HEK293 (cell line): ENCODE measurements at regions of chr17 and their contacts with region 1.

Region 1: DNA sequence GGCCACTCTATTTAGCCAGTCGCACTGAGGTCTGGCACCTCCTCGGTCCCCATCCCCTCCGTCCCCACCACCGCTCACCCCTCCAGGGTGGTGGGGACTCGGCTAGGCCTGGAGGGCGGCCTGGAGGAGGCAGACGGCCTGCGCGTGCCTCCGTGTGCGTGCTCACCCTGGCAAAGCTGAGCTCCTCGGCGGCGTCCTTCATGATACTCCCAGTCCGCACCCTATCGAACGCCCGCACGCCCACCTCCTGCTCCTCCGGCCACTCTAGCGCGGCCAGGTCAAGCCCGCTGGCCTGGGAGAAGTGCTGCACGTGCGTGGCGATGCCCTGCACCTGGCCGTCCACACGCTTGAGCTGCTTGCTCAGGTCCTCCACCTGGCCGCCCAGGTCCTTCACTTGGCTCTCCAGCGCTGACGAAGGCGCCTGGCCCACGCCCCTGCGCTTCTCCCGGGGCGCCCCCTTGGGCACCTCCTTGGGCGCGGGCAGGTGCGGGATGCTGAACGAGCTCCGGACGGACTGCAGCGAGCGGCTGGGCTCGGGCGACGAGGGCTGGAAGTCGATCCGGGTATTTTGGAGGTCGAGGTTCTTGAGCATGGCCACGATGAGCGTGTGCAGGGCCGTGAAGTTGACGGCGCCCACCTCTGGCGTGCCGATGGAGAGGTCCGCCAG is 644 bp downstream of the QRICH2 start:
- H3K4me3 ChIP-seq: no peak overlapping the region
- H3K27ac ChIP-seq: no peak overlapping the region
- H3K4me1 ChIP-seq: no peaks in the 10 kb centered on the region
- CTCF ChIP-seq: no peak

Region 2: GRCh38 chr17:76296186-76296585 is 11.2 kb before region 1 on chr17:
- CTCF ChIA-PET with region 1: interaction called, 18 read pairs
- POLR2A ChIA-PET with region 1: no interaction called
- H3K4me3 ChIP-seq: no peak overlapping the region
- H3K27ac ChIP-seq: no peak overlapping the region
- H3K4me1 ChIP-seq: no peaks in the 10 kb centered on the region
- CTCF ChIP-seq: no peak

Region 3: DNA sequence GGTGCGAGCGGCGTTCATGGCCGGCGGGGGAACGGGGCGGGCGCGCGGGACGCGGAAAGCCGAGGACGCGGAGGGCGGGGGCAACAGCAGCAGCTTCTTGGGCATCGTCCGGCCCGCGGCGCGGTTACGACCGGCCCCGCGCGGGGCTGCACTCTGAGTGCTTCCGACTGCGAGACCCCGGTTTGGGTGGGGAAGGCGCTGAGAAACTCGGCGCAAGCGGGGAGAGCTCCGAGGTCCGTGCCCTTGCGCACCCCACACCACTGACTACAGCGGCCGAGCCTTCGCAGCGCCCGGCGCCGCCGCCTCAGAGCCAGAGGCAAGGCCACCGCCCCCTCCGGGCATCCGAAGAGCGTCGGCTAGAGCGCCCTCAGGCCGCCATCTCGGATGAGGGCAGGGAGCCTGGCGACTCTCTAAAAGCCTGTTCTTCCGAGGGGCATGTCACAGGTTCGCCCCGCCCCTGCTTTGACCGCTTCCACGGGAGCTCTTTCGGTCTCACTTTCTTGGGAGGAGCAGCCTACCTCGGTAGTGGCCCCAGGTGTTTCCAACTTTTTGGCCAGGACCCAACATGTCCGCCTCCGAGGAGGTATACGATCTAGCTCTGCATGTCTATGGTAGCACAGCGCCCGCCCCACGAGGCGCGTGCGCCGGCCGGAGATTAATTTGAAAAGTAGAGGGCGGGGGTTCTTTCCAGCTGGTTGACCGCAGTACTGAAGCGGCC is 46.3 kb after region 1 on chr17 and contains the start of gene PRPSAP1:
- CTCF ChIA-PET with region 1: interaction called, 10 read pairs
- POLR2A ChIA-PET with region 1: interaction called, 4 read pairs
- H3K4me3 ChIP-seq: peak within 1 kb of the TSS; percentile 90
- H3K27ac ChIP-seq: peak within 1 kb of the TSS; percentile 96
- H3K4me1 ChIP-seq: peaks cover 12% of the 10 kb centered on the region; the same call in 1 of the 2 replicates
- CTCF ChIP-seq: peak; percentile 69

Region 4: DNA sequence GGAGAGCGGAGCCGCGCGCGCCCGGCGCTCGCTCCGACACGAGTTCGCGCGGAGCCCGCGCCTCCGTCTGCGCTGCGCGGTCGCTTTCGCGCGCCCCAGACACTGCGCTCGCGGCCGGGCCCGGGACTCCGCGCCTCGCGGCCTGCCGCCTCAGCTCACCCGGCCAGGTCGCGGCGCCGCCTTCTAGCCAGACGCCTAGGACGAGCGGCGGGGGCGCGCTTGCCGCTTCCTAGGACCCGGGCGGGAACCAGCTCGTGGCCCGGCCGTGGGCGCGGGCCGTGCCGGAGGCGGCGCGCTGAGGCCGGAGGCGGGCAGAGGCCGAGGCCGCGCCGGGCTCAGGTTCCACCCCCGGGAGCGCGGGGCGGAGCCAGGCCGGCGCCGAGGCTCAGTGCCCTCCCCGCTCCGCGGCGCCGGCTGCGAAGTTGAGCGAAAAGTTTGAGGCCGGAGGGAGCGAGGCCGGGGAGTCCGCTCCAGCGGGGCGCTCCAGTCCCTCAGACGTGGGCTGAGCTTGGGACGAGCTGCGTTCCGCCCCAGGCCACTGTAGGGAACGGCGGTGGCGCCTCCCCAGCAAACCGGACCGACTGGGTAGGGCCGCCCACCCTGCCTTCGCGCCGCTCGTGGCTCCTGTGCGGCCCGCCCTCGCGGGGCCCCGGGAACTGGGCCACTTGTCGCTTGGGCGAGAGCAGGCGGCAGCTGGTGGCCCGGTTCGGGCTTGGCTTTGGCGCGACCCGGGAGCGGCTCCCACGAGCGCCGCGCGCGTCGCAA is 77.0 kb after region 1 on chr17 and contains the start of gene SPHK1:
- CTCF ChIA-PET with region 1: interaction called, 49 read pairs
- POLR2A ChIA-PET with region 1: interaction called, 5 read pairs
- H3K4me3 ChIP-seq: peak within 1 kb of the TSS; percentile 54
- H3K27ac ChIP-seq: peak within 1 kb of the TSS; percentile 77; the same call in 1 of the 2 replicates
- H3K4me1 ChIP-seq: peaks cover 8% of the 10 kb centered on the region; the same call in 1 of the 2 replicates
- CTCF ChIP-seq: peak; percentile 36; the same call in 1 of the 2 replicates

Region 5: GRCh38 chr17:76390003-76390421 is 82.6 kb after region 1 on chr17:
- CTCF ChIA-PET with region 1: interaction called, 49 read pairs
- POLR2A ChIA-PET with region 1: interaction called, 5 read pairs
- H3K4me3 ChIP-seq: no peak overlapping the region
- H3K27ac ChIP-seq: no peak overlapping the region
- H3K4me1 ChIP-seq: peaks cover 4% of the 10 kb centered on the region; the same call in 1 of the 2 replicates
- CTCF ChIP-seq: no peak

Region 6: GRCh38 chr17:76458580-76459490 is 151.4 kb after region 1 on chr17:
- CTCF ChIA-PET with region 1: interaction called, 13 read pairs
- POLR2A ChIA-PET with region 1: no interaction called
- H3K4me3 ChIP-seq: no peak overlapping the region
- H3K27ac ChIP-seq: no peak overlapping the region
- H3K4me1 ChIP-seq: no peaks in the 10 kb centered on the region
- CTCF ChIP-seq: peak; percentile 79

Region 7: DNA sequence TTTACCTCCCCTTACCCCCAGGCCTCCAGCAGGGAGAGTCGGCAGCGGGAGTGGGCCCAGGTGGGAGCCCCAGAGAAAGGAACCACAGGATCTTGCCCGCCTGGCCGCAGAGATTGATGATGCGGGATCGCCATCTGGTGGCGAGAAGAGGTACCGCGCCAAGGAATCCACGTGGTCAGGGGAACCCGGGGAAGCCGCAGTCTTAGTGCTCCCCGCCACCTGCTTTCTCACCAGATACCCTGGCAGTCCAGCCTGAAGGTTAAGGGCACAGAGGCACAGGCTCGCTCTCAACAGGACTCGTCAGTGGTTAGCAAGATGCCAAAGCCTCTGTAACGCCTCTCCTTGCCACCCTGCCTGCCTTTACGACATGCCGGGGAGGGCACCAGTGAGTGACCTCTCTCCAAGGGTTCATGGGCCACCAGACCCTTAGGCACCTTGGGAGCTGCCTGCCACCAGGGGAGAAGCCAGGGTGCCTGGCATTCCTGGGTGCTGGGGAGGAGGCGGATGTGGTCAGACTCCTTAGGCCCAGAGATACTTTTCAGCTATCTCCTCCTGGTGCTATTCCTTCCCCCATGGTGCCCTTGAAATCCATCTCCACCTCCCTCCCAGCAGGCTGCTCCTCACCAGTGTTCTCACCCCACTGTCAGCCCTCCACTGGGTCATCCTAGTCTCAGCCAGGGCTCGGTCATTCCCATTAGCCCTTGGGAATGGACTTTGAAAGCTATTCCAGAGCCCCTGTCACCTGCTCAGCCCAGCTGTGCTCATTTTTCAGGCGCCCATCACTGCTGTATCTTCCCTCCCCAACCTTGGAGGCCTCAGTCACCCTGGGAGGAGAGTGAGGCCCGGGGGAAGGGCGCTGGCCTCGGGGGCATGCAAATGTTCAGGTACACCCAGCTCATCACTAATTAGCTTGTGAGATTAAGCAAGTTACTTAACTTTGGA is 199.2 kb after region 1 on chr17:
- CTCF ChIA-PET with region 1: interaction called, 20 read pairs
- POLR2A ChIA-PET with region 1: no interaction called
- H3K4me3 ChIP-seq: no peak overlapping the region
- H3K27ac ChIP-seq: no peak overlapping the region
- H3K4me1 ChIP-seq: peaks cover 3% of the 10 kb centered on the region; the same call in 1 of the 2 replicates
- CTCF ChIP-seq: peak; percentile 95